Activated CD4-positive, alpha-beta T cell treated with anti-CD3 and anti-CD28 coated beads for 36 hours (primary cell): ENCODE measurements at regions of chr6 and their contacts with region 1.

Region 1: DNA sequence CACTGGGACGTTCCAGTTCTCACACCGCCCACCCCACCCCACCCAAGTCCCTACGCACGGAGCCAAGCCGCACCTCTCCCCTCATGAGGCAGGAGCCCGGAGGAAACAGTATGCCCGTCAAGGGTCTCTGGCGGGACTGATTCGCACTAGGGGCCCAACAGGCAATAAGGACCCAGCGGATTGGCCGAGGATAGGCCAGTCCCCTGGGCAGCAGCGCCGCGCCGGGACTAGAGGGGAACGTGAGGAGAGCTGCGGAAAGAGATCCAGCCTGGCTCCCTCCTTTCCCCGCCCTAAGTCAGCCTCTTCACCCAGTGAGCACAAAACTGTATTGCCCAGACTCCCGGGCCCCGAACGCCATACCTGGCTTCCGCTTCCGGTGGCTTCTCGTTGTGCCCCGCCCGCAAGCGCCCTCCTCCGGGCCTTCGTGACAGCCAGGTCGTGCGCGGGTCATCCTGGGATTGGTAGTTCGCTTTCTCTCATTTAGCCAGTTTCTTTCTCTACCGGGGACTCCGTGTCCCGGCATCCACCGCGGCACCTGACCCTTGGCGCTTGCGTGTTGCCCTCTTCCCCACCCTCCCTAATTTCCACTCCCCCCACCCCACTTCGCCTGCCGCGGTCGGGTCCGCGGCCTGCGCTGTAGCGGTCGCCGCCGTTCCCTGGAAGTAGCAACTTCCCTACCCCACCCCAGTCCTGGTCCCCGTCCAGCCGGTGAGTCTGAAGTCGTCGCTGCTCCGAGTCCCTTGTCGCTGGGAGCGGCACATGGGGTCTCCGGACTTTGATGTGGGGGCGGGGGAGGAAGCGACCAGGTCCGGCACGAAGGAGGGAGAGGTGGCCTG is at the start of gene CSNK2B:
- DNase-seq: peak; percentile 99
- ATAC-seq: peak; percentile 89
- H3K4me3 Mint-ChIP-seq: peak within 1 kb of the TSS; percentile 99
- H3K27ac Mint-ChIP-seq: peak within 1 kb of the TSS; percentile 99
- H3K4me1 Mint-ChIP-seq: peaks cover 66% of the 10 kb centered on the region
- H3K27me3 Mint-ChIP-seq: no peaks in the 10 kb centered on the region
- total RNA-seq, gene CSNK2B: 239 to 346 TPM

Region 2: GRCh38 chr6:30907758-30908591 is 757.7 kb before region 1 on chr6 and contains the start of gene GTF2H4:
- CTCF ChIA-PET with region 1: no interaction called
- POLR2A ChIA-PET with region 1: no interaction called
- intact Hi-C with region 1: loop called in 1 of 2 experiments (anchors 5 kb)
- DNase-seq: peak; percentile 96
- ATAC-seq: peak; percentile 99
- H3K4me3 Mint-ChIP-seq: peak within 1 kb of the TSS; percentile 95
- H3K27ac Mint-ChIP-seq: peak within 1 kb of the TSS; percentile 86
- H3K4me1 Mint-ChIP-seq: peaks cover 17% of the 10 kb centered on the region
- H3K27me3 Mint-ChIP-seq: no peaks in the 10 kb centered on the region
- total RNA-seq, gene GTF2H4: 35.9 to 40.9 TPM

Region 3: DNA sequence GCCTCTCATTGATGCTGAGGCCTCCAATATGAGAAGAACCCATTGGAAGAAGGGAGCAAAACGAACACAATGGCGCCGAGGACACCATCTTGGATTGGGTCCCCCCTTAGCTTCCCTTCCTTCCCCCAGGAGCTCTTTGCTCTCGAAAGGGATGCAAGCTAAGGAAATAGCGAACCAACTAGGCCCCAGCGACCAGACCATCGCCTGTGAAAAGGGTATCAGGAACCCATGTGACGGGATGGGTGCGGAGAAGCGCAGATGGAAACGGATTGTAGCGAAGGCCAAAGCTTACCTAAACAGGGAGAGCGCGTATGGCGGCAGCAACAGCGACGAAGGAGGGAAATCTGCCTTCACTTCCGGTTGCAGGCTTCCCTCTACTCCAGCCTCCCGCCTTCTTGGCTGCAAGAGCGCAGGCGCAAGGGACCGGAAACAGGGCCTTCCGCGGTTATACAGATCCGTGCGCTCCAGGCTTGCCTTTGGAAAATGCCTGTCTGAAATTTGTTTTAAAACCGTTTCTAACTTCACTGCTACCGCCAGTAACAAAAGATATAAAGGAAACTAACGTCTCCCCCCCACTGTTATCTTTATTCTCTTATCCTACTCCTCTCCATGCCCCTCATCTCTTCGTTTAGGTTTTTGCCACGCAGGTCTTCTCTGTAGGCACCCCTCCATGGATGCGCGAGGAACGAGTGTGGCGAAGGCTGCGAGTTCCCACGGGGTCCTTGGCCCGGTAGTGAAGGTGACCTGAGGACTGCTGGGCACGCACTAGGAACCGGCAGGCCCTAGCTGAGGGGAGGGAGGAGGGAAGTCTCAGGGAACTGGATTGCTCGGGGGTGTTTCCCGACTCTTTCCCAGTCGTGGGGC is 123.8 kb before region 1 on chr6 and contains the start of gene DDX39B:
- CTCF ChIA-PET with region 1: interaction called, 4 read pairs
- POLR2A ChIA-PET with region 1: interaction called, 16 read pairs
- intact Hi-C with region 1: loop called in 1 of 2 experiments (anchors 1 kb)
- DNase-seq: peak; percentile 96
- ATAC-seq: peak; percentile 77
- H3K4me3 Mint-ChIP-seq: peak within 1 kb of the TSS; percentile 79
- H3K27ac Mint-ChIP-seq: peak within 1 kb of the TSS; percentile 92
- H3K4me1 Mint-ChIP-seq: peaks cover 50% of the 10 kb centered on the region
- H3K27me3 Mint-ChIP-seq: no peaks in the 10 kb centered on the region
- total RNA-seq, gene DDX39B: 517 to 569 TPM

Region 4: DNA sequence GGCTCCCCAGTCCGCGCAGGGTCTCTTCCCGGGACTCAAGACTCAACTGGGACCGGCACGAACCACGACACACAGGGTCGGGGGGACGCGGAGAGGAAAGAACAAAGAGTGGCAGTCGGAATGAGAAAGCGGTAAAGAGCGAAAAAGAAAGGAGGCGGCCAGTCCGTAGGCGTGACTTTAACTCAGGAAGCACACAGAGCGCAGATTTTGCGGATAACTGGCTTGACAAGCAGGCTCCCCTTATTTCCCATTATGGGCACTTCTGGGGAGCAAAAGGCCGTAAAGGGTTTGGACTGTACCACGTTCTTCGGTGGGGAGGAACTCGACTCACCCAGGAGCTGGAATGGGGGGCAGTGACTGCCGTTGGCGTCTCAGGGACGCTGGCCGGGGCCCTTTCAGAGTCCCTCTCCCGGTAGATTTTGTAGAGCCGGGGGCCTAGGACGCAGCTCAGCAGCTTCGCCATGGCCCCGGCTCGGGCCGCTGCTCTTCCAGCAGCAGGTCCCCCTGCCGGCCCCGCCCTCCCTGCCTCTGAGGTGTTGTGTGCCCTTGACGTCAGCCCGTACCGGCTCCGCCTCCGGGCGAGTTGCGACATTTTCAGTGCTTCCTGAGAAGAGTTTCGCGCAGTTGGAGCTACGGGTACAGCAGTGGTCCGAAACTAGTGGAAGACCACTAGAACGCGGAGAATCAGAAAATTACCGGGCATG is 37.3 kb after region 1 on chr6 and contains the start of gene ABHD16A:
- CTCF ChIA-PET with region 1: interaction called, 3 read pairs
- POLR2A ChIA-PET with region 1: interaction called, 5 read pairs
- intact Hi-C with region 1: loop called (anchors 1 to 2 kb)
- DNase-seq: peak; percentile 99
- ATAC-seq: peak; percentile 91
- H3K4me3 Mint-ChIP-seq: peak within 1 kb of the TSS; percentile 99
- H3K27ac Mint-ChIP-seq: peak within 1 kb of the TSS; percentile 97
- H3K4me1 Mint-ChIP-seq: peaks cover 24% of the 10 kb centered on the region
- H3K27me3 Mint-ChIP-seq: no peaks in the 10 kb centered on the region
- total RNA-seq, gene ABHD16A: 20.9 to 25.1 TPM

Region 5: DNA sequence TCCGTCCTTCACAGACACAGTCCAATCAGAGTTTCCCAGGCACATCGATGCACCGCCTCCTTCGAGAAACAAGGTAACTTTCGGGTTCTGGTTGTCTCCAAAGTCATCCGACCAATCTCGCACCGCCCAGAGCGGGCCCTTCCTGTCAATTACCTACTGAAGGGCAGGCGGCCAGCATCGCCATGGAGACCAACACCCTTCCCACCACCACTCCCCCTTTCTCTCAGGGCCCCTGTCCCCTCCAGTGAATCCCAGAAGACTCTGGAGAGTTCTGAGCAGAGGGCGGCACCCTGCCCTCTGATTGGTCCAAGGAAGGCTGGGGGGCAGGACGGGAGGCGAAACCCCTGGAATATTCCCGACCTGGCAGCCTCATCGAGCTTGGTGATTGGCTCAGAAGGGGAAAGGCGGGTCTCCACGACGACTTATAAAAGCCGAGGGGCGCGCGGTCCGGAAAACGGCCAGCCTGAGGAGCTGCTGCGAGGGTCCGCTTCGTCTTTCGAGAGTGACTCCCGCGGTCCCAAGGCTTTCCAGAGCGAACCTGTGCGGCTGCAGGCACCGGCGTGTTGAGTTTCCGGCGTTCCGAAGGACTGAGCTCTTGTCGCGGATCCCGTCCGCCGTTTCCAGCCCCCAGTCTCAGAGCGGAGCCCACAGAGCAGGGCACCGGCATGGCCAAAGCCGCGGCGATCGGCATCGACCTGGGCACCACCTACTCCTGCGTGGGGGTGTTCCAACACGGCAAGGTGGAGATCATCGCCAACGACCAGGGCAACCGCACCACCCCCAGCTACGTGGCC is 161.8 kb after region 1 on chr6 and contains the start of gene HSPA1B:
- CTCF ChIA-PET with region 1: interaction called, 4 read pairs
- POLR2A ChIA-PET with region 1: interaction called, 4 read pairs
- intact Hi-C with region 1: loop called (anchors 1 to 5 kb)
- DNase-seq: peak; percentile 97
- ATAC-seq: peak; percentile 83
- H3K4me3 Mint-ChIP-seq: peak within 1 kb of the TSS; percentile 77
- H3K27ac Mint-ChIP-seq: peak within 1 kb of the TSS; percentile 92
- H3K4me1 Mint-ChIP-seq: peaks cover 43% of the 10 kb centered on the region
- H3K27me3 Mint-ChIP-seq: no peaks in the 10 kb centered on the region
- total RNA-seq, gene HSPA1B: 54.6 to 61.1 TPM

Region 6: DNA sequence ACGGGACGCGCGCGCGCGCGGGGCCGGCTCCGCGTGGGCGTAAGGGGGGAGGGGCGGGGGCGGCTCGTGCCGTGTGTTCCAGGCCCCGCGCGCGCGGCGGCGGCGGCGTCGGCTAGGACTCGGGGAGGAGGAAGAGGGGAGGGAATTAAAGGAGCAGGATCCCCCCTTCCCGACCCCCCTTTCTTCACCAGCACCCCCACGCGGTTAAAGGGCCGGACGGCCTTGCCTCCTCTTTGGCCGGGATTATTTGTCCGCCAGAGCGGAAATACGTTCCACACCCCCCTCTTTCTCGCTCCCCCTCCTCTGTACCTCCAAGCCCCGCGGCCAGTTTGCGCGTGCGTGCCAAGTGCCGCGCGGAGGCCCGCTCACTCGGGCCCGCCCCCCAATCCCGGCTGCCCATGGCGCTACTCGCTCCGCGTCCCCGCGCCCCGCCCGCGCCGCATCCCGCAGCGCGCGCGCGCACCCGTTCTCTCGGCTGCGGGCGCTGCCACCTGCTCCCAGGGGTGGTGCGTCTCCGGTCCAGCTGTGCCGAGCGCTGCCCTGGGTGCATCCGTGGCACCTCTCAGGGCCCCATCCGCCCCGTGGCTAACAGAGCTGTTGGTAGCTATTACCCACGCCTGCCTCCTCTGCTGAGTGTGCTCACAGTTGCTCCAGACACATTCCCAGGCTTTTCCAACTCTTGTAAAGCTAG is 236.4 kb after region 1 on chr6 and contains the start of gene ZBTB12:
- CTCF ChIA-PET with region 1: interaction called, 4 read pairs
- POLR2A ChIA-PET with region 1: no interaction called
- intact Hi-C with region 1: loop called in 1 of 2 experiments (anchors 1 kb)
- DNase-seq: peak; percentile 92
- ATAC-seq: peak; percentile 63
- H3K4me3 Mint-ChIP-seq: peak within 1 kb of the TSS; percentile 69
- H3K27ac Mint-ChIP-seq: peak within 1 kb of the TSS; percentile 78
- H3K4me1 Mint-ChIP-seq: peaks cover 25% of the 10 kb centered on the region
- H3K27me3 Mint-ChIP-seq: no peaks in the 10 kb centered on the region
- total RNA-seq, gene ZBTB12: 1.9 to 2.4 TPM

Region 7: GRCh38 chr6:32177788-32178546 is 512.2 kb after region 1 on chr6 and contains the start of gene RNF5:
- CTCF ChIA-PET with region 1: no interaction called
- POLR2A ChIA-PET with region 1: interaction called, 3 read pairs
- intact Hi-C with region 1: loop called in 1 of 2 experiments (anchors 1 kb)
- DNase-seq: peak; percentile 96
- ATAC-seq: peak; percentile 89
- H3K4me3 Mint-ChIP-seq: peak within 1 kb of the TSS; percentile 92
- H3K27ac Mint-ChIP-seq: peak within 1 kb of the TSS; percentile 98
- H3K4me1 Mint-ChIP-seq: peaks cover 70% of the 10 kb centered on the region
- H3K27me3 Mint-ChIP-seq: no peaks in the 10 kb centered on the region
- total RNA-seq, gene RNF5: 51.7 to 65.6 TPM